Right ventricle myocardium superior (tissue), 1 donor: ENCODE measurements at regions of chr3 and their contacts with region 1.

Region 1: DNA sequence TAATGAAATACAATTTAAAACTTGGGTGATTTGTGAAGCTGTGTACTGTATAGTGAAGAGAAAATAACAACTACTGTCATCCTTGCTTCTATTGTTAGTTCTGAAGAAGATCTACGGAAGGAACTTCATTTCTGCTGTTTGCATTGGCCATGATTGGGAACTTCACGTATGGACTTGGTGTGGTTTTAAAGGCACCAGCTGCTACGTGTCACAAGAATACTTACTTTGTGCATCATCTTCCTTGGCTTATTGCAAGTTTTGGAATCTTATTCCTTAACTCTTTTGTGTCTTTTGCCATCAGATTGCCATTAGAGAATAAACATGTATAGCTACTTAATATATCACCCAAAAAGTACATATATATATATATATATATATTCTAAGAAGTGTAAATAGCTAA is 75.0 kb upstream of the VEPH1 start:
- DNase-seq: no peak
- ATAC-seq: no peak

Region 2: DNA sequence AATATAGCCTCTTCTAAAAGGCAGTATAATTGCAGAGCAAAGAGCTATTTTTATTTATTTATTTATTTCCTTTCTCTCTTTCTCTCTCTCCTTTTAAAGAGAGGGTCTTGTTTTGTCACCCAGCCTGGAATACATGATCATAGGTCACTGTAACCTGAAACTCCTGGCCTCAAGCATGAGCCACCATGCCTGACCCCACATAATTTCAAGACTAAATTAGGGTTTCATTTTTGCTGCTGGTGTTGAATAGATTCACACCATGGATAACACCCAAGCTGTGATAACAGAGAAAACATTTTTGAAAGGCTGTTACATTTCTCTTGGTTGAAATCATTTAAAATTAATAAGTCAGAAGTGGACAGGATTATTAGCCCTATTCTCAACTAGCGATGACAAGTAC is 620.5 kb before region 1 on chr3:
- intact Hi-C with region 1: no loop called
- DNase-seq: no peak
- ATAC-seq: no peak

Region 3: GRCh38 chr3:157532529-157533297 is 45.5 kb before region 1 on chr3:
- intact Hi-C with region 1: loop called (anchors 5 kb)
- DNase-seq: no peak
- ATAC-seq: peak; percentile 93

Region 4: GRCh38 chr3:157810924-157811718 is 232.9 kb after region 1 on chr3:
- intact Hi-C with region 1: no loop called
- DNase-seq: no peak
- ATAC-seq: no peak